ENCODE measurements at regions of chrX and their contacts with region 1.

Region 1: GRCh38 chrX:24561121-24561520 is 86.0 kb downstream of the PCYT1B start:
- DNase-seq: no peak
- ATAC-seq: peak; percentile 82
- H3K4me3 ChIP-seq: no peak overlapping the region
- H3K27ac ChIP-seq: no peak overlapping the region
- H3K4me1 ChIP-seq: no peaks in the 10 kb centered on the region
- H3K27me3 ChIP-seq: no peaks in the 10 kb centered on the region; a peak in 2 of 4 replicates
- CTCF ChIP-seq: peak; percentile 35 to 51 (median 42); a peak in 3 of 6 replicates
- EP300 ChIP-seq: no peak
- POLR2A ChIP-seq: no peak
- RAD21 ChIP-seq: peak; percentile 53

Region 2: GRCh38 chrX:24371391-24371972 is 189.6 kb before region 1 on chrX:
- CTCF ChIA-PET with region 1: interaction called, 9 read pairs
- POLR2A ChIA-PET with region 1: no interaction called
- RAD21 ChIA-PET with region 1: interaction called, 3 read pairs
- SMC1A ChIA-PET with region 1: interaction called, 9 read pairs
- in situ Hi-C with region 1: no loop called
- intact Hi-C with region 1: loop called (anchors 1 kb)
- DNase-seq: peak; percentile 8
- ATAC-seq: peak; percentile 97
- H3K4me3 ChIP-seq: no peak overlapping the region
- H3K27ac ChIP-seq: no peak overlapping the region
- H3K4me1 ChIP-seq: no peaks in the 10 kb centered on the region
- H3K27me3 ChIP-seq: peaks cover 0 to 2% of the 10 kb centered on the region in 2 experiments; a peak in 1 of 4 replicates
- CTCF ChIP-seq: peak; percentile 72 to 79 (median 73)
- EP300 ChIP-seq: no peak
- POLR2A ChIP-seq: no peak
- RAD21 ChIP-seq: peak; percentile 70

Region 3: GRCh38 chrX:24542756-24543155 is 18.4 kb before region 1 on chrX:
- CTCF ChIA-PET with region 1: no interaction called
- POLR2A ChIA-PET with region 1: no interaction called
- RAD21 ChIA-PET with region 1: no interaction called
- SMC1A ChIA-PET with region 1: no interaction called
- in situ Hi-C with region 1: no loop called
- intact Hi-C with region 1: no loop called
- DNase-seq: no peak
- ATAC-seq: no peak
- H3K4me3 ChIP-seq: no peak overlapping the region
- H3K27ac ChIP-seq: no peak overlapping the region
- H3K4me1 ChIP-seq: no peaks in the 10 kb centered on the region
- H3K27me3 ChIP-seq: no peaks in the 10 kb centered on the region
- CTCF ChIP-seq: no peak
- EP300 ChIP-seq: no peak
- POLR2A ChIP-seq: no peak
- RAD21 ChIP-seq: no peak

Measured in GM12878 (cell line).